Colonic mucosa (tissue), 4 donors: ENCODE measurements at regions of chr16 and their contacts with region 1.

Region 1: GRCh38 chr16:23194497-23195221 is 12.1 kb downstream of the SCNN1G start:
- DNase-seq: no peak
- H3K4me3 ChIP-seq: no peak overlapping the region
- H3K27ac ChIP-seq: no peak overlapping the region
- H3K4me1 ChIP-seq: no peaks in the 10 kb centered on the region
- H3K27me3 ChIP-seq: no peaks in the 10 kb centered on the region
- CTCF ChIP-seq: no peak

Region 2: DNA sequence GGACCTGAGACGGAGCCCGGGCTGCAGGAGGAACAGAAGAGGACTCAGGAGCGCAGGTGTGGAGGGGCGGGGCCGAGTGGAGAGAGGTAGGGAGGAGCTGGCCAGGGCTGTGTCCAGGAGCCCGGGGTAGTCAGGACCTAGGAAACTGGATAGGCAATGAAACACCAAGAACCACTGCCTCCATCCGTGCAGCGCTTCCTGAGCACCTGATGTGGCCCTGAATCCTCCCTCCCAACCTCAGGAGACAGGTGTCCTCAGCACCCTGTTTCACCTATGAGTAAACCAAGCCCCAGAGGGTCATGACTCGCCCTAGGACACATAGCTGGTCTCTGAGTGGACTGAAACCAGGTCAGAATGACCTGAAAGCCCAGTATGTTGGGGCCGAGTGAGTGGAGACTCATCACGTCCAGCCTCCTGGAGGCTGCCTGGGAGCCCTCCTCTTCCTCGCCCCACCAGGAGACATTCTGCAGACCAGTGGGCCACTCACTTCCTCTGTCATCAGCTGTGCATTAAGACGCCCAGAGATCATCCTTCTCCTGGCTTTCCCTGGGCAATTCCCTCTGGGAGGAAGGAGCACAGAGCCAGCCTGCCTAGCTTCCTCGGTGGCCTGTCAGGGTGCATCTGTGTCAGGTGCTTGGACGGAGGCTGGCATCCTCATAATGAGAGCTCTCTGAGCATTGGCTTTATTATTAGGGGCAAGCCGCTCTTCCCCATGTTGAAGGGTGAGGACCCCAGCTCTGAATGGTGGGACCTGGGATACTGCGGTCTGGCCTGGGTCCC is 180.3 kb after region 1 on chr16:
- intact Hi-C with region 1: loop called (anchors 5 kb)
- DNase-seq: peak; percentile 72
- H3K4me3 ChIP-seq: no peak overlapping the region
- H3K27ac ChIP-seq: no peak overlapping the region
- H3K4me1 ChIP-seq: no peaks in the 10 kb centered on the region
- H3K27me3 ChIP-seq: no peaks in the 10 kb centered on the region
- CTCF ChIP-seq: no peak